CD4-positive, alpha-beta T cell (primary cell): ENCODE measurements at regions of chr17 and their contacts with region 1.

Region 1: DNA sequence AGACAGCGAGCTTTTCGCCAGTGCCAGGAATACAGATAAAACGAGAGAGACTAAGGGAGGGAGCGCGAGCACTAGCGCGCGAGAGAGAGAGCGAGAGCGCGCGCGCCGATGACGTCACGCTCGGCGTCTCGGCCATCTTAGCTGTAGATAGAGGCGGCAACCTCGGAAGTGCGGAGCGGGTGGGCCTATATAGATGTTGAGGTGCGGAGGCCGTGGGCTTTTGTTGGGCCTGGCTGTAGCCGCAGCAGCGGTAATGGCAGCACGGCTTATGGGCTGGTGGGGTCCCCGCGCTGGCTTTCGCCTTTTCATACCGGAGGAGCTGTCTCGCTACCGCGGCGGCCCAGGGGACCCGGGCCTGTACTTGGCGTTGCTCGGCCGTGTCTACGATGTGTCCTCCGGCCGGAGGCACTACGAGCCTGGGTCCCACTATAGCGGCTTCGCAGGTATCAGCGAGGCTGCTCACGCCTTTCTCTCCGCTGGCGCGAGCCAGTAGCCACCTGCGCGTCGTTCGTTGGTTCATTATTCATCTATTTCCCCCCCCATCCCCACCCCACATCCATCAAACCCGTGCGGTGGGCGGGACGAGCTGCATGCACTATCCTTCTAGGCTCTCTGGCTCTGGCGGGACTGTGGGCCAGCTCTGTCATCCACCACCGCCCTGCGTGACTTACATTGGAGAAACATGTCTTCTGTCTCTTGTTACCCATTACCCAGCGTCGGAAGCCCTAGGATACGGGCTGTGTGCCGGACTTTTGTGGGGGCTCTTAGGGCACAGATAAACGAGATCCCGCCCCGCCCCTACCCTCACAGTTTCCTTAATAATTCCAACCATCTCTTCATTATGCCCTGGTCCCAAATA is 795 bp downstream of the CYB5D2 start:
- DNase-seq: peak; percentile 85 to 98 (median 90)
- ATAC-seq: peak; percentile 67
- H3K4me3 ChIP-seq: peak overlapping the region; percentile 95
- H3K4me3 Mint-ChIP-seq: peak overlapping the region; percentile 96
- H3K27ac ChIP-seq: peak overlapping the region; percentile 98 to 100
- H3K27ac Mint-ChIP-seq: peak overlapping the region; percentile 100
- H3K4me1 ChIP-seq: peaks cover 44% of the 10 kb centered on the region
- H3K4me1 Mint-ChIP-seq: peaks cover 49% of the 10 kb centered on the region
- H3K27me3 ChIP-seq: no peaks in the 10 kb centered on the region
- H3K27me3 Mint-ChIP-seq: no peaks in the 10 kb centered on the region
- CTCF ChIP-seq: no peak

Region 2: DNA sequence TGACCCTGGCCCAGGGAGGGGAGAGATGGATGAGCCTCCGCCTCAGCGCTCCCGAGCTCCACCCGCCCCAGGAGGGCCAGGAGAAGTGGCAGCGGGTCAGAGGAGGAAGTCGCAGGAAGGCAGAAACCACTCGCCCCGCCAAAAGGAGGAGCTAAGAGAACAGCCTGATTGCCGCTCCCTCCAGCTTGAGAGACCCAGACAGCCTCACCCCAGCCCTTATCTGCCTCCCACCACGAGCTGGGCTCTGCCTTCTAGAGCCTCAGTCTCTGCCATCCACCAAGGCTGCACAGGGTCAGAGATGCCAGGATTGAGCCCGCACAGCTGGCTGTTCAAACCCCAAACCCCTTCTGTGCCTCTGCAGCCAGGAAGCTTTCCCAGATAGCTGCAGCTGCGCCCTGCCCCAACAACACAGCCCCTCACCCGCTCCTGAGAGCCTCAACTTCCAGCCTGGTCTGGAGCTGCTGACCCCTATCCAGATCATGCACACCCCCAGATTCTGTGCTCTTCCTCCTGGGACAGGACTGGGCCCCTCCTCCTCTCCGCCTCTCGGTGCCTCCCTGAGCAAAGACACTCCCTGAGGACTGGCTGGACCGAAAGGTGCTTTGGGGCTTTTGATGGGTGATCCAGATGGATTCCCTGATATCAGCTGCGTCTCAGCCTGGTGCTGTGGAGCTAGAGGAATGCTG is 178.5 kb before region 1 on chr17:
- CTCF ChIA-PET with region 1: no interaction called
- POLR2A ChIA-PET with region 1: interaction called, 40 read pairs
- intact Hi-C with region 1: loop called (anchors 2 to 5 kb)
- DNase-seq: peak; percentile 44 to 81 (median 58)
- ATAC-seq: peak; percentile 58
- H3K4me3 ChIP-seq: peak overlapping the region; percentile 65
- H3K4me3 Mint-ChIP-seq: peak overlapping the region; percentile 92
- H3K27ac ChIP-seq: peak overlapping the region; percentile 57 to 84
- H3K27ac Mint-ChIP-seq: peak overlapping the region; percentile 92
- H3K4me1 ChIP-seq: peaks cover 52% of the 10 kb centered on the region
- H3K4me1 Mint-ChIP-seq: peaks cover 51% of the 10 kb centered on the region
- H3K27me3 ChIP-seq: no peaks in the 10 kb centered on the region
- H3K27me3 Mint-ChIP-seq: no peaks in the 10 kb centered on the region
- CTCF ChIP-seq: no peak

Region 3: GRCh38 chr17:4161179-4161559 is 17.4 kb after region 1 on chr17:
- CTCF ChIA-PET with region 1: no interaction called
- POLR2A ChIA-PET with region 1: interaction called, 51 read pairs
- intact Hi-C with region 1: no loop called
- DNase-seq: no peak
- ATAC-seq: no peak
- H3K4me3 ChIP-seq: no peak overlapping the region
- H3K4me3 Mint-ChIP-seq: no peak overlapping the region
- H3K27ac ChIP-seq: no peak overlapping the region
- H3K27ac Mint-ChIP-seq: no peak overlapping the region
- H3K4me1 ChIP-seq: peaks cover 13% of the 10 kb centered on the region
- H3K4me1 Mint-ChIP-seq: peaks cover 5% of the 10 kb centered on the region
- H3K27me3 ChIP-seq: no peaks in the 10 kb centered on the region
- H3K27me3 Mint-ChIP-seq: no peaks in the 10 kb centered on the region
- CTCF ChIP-seq: no peak

Region 4: DNA sequence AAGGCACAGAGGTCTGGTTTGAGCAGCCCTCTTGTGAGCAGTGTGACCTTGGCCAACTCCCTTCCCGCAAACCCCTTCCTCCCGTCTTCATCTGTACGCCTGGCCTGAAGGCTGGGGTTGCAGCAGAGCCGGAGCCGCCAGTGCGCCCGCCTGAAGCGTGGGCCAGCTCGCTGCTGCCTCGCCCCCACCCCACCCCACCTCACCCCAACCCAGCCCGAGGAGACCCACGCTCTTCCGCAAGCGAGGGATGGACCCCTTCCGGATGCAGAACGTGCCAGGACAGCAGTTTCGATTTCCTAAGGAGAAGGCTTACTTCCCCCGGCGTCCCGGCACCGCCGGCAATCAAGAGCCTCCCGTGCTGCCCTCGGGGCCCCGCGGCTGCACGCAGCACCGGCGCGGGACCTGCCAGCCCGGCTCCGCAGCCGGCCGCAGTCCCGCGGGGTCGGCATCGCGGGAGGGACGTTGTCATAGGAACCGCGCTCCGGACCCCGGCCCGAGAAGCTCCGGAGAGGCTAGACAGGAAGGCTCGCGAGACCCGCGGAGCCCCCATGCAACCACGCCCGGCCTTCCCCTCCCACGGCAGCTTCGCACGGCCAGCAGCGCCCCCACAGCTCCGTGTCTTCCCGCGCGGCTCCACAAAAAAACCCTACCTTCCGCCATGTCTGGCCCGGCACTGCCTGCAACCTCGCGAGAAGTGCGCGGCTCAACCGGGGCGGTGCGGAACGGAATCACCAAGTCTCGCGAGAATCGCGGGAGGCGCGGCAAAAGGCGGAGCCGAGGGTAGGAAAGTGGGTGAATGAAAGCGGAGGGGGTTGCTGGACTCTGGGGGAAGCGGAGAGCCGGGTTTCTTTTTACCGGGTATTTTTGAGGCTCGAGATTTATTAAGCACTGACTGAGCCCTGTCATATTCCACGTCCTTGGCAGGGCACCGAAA is 119.8 kb after region 1 on chr17 and contains the start of gene ANKFY1:
- CTCF ChIA-PET with region 1: no interaction called
- POLR2A ChIA-PET with region 1: interaction called, 18 read pairs
- intact Hi-C with region 1: loop called in 1 of 2 experiments (anchors 10 kb)
- DNase-seq: peak; percentile 95 to 98 (median 97)
- ATAC-seq: peak; percentile 97
- H3K4me3 ChIP-seq: peak within 1 kb of the TSS; percentile 75
- H3K4me3 Mint-ChIP-seq: peak within 1 kb of the TSS; percentile 95
- H3K27ac ChIP-seq: peak within 1 kb of the TSS; percentile 60 to 64
- H3K27ac Mint-ChIP-seq: peak within 1 kb of the TSS; percentile 75
- H3K4me1 ChIP-seq: peaks cover 32% of the 10 kb centered on the region
- H3K4me1 Mint-ChIP-seq: peaks cover 36% of the 10 kb centered on the region
- H3K27me3 ChIP-seq: no peaks in the 10 kb centered on the region
- H3K27me3 Mint-ChIP-seq: no peaks in the 10 kb centered on the region
- CTCF ChIP-seq: no peak
- total RNA-seq, gene ANKFY1: 31.8 to 39.1 TPM

Region 5: GRCh38 chr17:4354862-4355514 is 211.2 kb after region 1 on chr17:
- CTCF ChIA-PET with region 1: no interaction called
- POLR2A ChIA-PET with region 1: no interaction called
- intact Hi-C with region 1: no loop called
- DNase-seq: no peak
- ATAC-seq: no peak
- H3K4me3 ChIP-seq: no peak overlapping the region
- H3K4me3 Mint-ChIP-seq: peak overlapping the region; percentile 4
- H3K27ac ChIP-seq: no peak overlapping the region
- H3K27ac Mint-ChIP-seq: no peak overlapping the region
- H3K4me1 ChIP-seq: peaks cover 40% of the 10 kb centered on the region
- H3K4me1 Mint-ChIP-seq: peaks cover 59% of the 10 kb centered on the region
- H3K27me3 ChIP-seq: no peaks in the 10 kb centered on the region
- H3K27me3 Mint-ChIP-seq: no peaks in the 10 kb centered on the region
- CTCF ChIP-seq: no peak

Region 6: GRCh38 chr17:4948931-4949320 is 805.1 kb after region 1 on chr17:
- CTCF ChIA-PET with region 1: no interaction called
- POLR2A ChIA-PET with region 1: interaction called, 10 read pairs
- intact Hi-C with region 1: no loop called
- DNase-seq: peak in 13 of 14 experiments; percentile 36 to 89 (median 66)
- ATAC-seq: peak; percentile 32
- H3K4me3 ChIP-seq: peak overlapping the region; percentile 99
- H3K4me3 Mint-ChIP-seq: peak overlapping the region; percentile 99
- H3K27ac ChIP-seq: peak overlapping the region; percentile 84 to 98
- H3K27ac Mint-ChIP-seq: peak overlapping the region; percentile 90
- H3K4me1 ChIP-seq: peaks cover 45% of the 10 kb centered on the region
- H3K4me1 Mint-ChIP-seq: peaks cover 51% of the 10 kb centered on the region
- H3K27me3 ChIP-seq: no peaks in the 10 kb centered on the region
- H3K27me3 Mint-ChIP-seq: no peaks in the 10 kb centered on the region
- CTCF ChIP-seq: no peak